ENCODE measurements at regions of chr5 and their contacts with region 1.

Region 1: GRCh38 chr5:54944364-54944763 is 41.0 kb downstream of the ESM1 start:
- DNase-seq: no peak
- H3K4me3 ChIP-seq: no peak overlapping the region
- H3K27ac ChIP-seq: no peak overlapping the region
- H3K4me1 ChIP-seq: no peaks in the 10 kb centered on the region
- H3K27me3 ChIP-seq: no peaks in the 10 kb centered on the region
- CTCF ChIP-seq: peak in 2 of 3 experiments; percentile 24 to 51; a peak in 2 of 4 replicates
- EP300 ChIP-seq: no peak
- POLR2A ChIP-seq: no peak
- RAD21 ChIP-seq: peak; percentile 34 to 38; a peak in 3 of 4 replicates

Region 2: GRCh38 chr5:54930736-54931135 is 13.6 kb before region 1 on chr5:
- CTCF ChIA-PET with region 1: interaction called, 21 read pairs
- POLR2A ChIA-PET with region 1: no interaction called
- DNase-seq: no peak
- H3K4me3 ChIP-seq: no peak overlapping the region
- H3K27ac ChIP-seq: no peak overlapping the region
- H3K4me1 ChIP-seq: no peaks in the 10 kb centered on the region
- H3K27me3 ChIP-seq: peaks cover 0 to 1% (median 0%) of the 10 kb centered on the region in 4 experiments; a peak in 1 of 7 replicates
- CTCF ChIP-seq: no peak
- EP300 ChIP-seq: no peak
- POLR2A ChIP-seq: no peak
- RAD21 ChIP-seq: no peak

Region 3: GRCh38 chr5:54969856-54970828 is 25.8 kb after region 1 on chr5:
- CTCF ChIA-PET with region 1: interaction called, 24 read pairs
- POLR2A ChIA-PET with region 1: no interaction called
- DNase-seq: no peak
- H3K4me3 ChIP-seq: no peak overlapping the region
- H3K27ac ChIP-seq: no peak overlapping the region
- H3K4me1 ChIP-seq: no peaks in the 10 kb centered on the region
- H3K27me3 ChIP-seq: no peaks in the 10 kb centered on the region
- CTCF ChIP-seq: no peak
- EP300 ChIP-seq: no peak
- POLR2A ChIP-seq: no peak
- RAD21 ChIP-seq: no peak

Region 4: DNA sequence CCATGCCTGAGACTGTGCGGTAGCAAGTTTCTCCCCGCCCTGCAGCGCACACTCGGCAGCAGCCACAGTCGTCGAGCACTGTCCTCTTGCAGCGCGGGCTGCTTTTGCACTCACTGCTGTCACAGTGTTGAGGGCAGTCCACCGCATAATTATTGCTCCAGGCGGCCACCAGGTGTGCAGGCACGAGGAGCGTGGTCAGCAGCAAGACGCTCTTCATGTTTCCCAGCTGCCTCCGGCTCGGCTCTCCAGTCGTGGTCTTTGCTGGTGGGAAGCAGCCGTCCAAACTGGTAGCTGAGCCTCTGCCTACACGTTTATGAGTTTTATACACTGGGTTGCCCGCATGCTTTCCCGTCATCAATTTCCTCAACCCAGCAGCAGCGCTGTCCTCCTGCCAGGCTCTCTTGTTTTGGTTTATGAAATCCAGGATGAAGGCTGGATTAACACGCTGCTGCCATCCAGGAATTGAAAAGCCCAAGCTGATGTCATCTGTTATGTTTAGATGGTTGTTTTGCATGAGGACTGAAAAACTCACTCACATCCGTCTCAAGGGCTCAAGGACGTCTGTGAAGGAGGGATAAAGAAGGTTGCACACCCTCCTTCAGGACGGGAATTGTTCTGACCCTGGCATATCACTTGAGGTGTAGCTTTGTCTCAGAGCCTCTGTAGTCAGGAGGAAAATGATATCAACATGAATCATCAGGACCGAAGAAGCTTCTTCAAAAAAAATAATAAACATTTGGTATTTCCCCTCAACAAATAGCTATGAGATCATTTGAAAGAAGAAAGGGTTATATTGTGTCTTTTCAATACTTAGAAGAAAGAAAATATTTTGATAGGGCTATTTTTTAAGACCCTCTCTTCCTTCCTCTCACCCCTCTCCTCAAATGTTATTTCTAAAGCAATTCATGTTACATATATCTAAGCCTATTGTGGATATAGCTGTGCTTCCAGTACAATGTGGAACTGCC is 41.2 kb after region 1 on chr5 and contains the start of gene ESM1:
- CTCF ChIA-PET with region 1: interaction called, 16 read pairs
- POLR2A ChIA-PET with region 1: no interaction called
- DNase-seq: no peak
- H3K4me3 ChIP-seq: no peak within 1 kb of the TSS
- H3K27ac ChIP-seq: no peak within 1 kb of the TSS
- H3K4me1 ChIP-seq: peaks cover 0 to 4% (median 2%) of the 10 kb centered on the region in 4 experiments; a peak in 4 of 7 replicates
- H3K27me3 ChIP-seq: no peaks in the 10 kb centered on the region
- CTCF ChIP-seq: no peak
- EP300 ChIP-seq: no peak
- POLR2A ChIP-seq: no peak
- RAD21 ChIP-seq: no peak
- total RNA-seq, gene ESM1: not detected in 2 replicates

Region 5: GRCh38 chr5:55146543-55147151 is 202.3 kb after region 1 on chr5:
- CTCF ChIA-PET with region 1: interaction called, 30 read pairs
- POLR2A ChIA-PET with region 1: no interaction called
- DNase-seq: peak; percentile 80 to 90
- H3K4me3 ChIP-seq: peak overlapping the region in 1 of 4 experiments; percentile 10; a peak in 1 of 8 replicates
- H3K27ac ChIP-seq: no peak overlapping the region
- H3K4me1 ChIP-seq: no peaks in the 10 kb centered on the region
- H3K27me3 ChIP-seq: no peaks in the 10 kb centered on the region
- CTCF ChIP-seq: peak; percentile 74 to 97 (median 92)
- EP300 ChIP-seq: no peak; a peak in 1 of 3 replicates
- POLR2A ChIP-seq: no peak
- RAD21 ChIP-seq: peak; percentile 99 to 100

Measured in H1 (cell line).